ENCODE measurements at regions of chr3 and their contacts with region 1.

Region 1: DNA sequence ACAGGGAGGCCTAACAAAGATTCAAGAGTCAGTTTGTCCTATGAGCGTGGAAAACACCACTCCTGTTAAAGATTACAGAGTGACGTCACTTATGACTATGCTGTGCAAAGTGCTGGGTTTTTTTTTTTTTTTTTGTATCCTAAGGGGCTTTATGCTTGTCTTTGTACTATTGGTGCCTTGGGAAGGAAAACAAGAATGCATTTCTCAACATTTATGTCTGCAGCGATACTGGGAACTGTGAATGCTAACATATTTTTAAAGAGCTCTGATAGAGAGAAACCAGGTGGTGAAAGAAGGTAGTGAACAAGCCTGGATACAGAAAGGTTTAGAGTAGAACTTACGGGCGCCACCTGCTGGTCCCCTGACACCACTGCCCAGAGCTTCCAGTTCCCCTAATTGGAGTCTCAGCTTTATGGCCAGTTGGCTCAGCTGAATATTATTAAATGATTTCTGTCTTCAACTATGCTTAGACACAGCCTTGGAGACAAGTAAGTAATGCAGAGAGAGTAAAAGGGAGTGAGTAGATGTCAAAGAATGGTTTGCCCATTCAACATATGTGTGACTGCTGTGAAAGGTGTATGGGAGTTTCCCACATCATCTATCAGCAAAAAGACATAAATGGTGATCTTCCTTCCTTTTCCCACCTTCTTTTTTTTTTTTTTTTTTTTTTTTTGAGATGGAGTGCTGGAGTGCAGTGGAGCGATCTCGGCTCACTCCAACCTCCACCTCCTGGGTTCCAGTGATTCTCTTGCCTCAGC is 807.9 kb upstream of the CFAP20DC start:
- DNase-seq: peak; percentile 86
- H3K4me3 ChIP-seq: no peak overlapping the region
- H3K27ac ChIP-seq: no peak overlapping the region
- H3K4me1 ChIP-seq: peaks cover 0 to 4% (median 2%) of the 10 kb centered on the region in 4 donors
- H3K27me3 ChIP-seq: no peaks in the 10 kb centered on the region
- CTCF ChIP-seq: peak; percentile 84 to 96 (median 91)
- EP300 ChIP-seq: no peak
- POLR2A ChIP-seq: no peak

Region 2: DNA sequence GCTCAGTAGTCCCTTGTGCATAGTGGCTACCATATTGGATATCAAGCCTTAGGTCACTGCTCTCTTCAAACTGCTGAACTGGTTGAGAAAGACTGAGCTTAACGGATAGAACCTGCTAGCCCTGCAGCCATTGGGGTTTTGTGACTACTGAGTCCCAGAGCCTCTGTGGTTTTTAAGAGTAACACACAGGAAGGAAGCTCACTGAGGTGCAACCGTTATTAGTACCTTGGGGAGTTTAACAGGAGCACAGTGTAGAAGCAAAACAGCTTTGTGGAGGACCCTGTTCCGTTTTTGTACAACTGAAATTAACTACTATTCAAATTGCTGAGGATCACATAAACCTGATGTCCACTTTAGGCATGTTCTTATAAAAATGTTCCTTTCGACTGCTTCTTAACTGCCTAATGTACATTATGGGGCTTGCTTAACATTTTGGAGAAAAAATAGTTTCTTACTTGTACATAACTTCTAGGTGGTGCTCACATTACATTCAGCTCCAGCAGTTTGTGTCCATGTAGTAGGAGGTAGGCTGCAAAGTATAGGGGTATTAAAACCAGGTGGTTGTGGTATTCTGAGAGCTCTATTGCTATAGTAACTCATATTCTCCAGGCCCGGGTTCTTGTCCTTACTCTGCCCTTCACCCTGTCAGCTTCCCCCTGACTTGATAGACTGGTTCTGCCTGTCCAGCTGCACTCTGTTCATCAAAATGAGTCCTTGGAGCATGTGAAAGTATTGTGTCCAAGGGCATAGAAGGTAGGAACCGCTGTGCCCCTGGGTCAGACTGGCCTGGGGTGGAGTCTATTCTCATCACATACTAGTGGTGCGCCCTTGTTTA is 1507.8 kb before region 1 on chr3:
- in situ Hi-C with region 1: no loop called
- intact Hi-C with region 1: no loop called
- DNase-seq: no peak
- H3K4me3 ChIP-seq: no peak overlapping the region
- H3K27ac ChIP-seq: no peak overlapping the region
- H3K4me1 ChIP-seq: peaks cover 7 to 17% (median 8%) of the 10 kb centered on the region in 4 donors
- H3K27me3 ChIP-seq: no peaks in the 10 kb centered on the region
- CTCF ChIP-seq: no peak
- EP300 ChIP-seq: no peak
- POLR2A ChIP-seq: no peak

Region 3: GRCh38 chr3:59212128-59212779 is 645.5 kb before region 1 on chr3:
- in situ Hi-C with region 1: loop called in 3 of 4 experiments (anchors 25 kb)
- intact Hi-C with region 1: no loop called
- DNase-seq: no peak
- H3K4me3 ChIP-seq: no peak overlapping the region
- H3K27ac ChIP-seq: no peak overlapping the region
- H3K4me1 ChIP-seq: peaks cover 0 to 4% (median 0%) of the 10 kb centered on the region in 4 donors
- H3K27me3 ChIP-seq: no peaks in the 10 kb centered on the region
- CTCF ChIP-seq: peak; percentile 63 to 71 (median 68)
- EP300 ChIP-seq: no peak
- POLR2A ChIP-seq: no peak

Region 4: DNA sequence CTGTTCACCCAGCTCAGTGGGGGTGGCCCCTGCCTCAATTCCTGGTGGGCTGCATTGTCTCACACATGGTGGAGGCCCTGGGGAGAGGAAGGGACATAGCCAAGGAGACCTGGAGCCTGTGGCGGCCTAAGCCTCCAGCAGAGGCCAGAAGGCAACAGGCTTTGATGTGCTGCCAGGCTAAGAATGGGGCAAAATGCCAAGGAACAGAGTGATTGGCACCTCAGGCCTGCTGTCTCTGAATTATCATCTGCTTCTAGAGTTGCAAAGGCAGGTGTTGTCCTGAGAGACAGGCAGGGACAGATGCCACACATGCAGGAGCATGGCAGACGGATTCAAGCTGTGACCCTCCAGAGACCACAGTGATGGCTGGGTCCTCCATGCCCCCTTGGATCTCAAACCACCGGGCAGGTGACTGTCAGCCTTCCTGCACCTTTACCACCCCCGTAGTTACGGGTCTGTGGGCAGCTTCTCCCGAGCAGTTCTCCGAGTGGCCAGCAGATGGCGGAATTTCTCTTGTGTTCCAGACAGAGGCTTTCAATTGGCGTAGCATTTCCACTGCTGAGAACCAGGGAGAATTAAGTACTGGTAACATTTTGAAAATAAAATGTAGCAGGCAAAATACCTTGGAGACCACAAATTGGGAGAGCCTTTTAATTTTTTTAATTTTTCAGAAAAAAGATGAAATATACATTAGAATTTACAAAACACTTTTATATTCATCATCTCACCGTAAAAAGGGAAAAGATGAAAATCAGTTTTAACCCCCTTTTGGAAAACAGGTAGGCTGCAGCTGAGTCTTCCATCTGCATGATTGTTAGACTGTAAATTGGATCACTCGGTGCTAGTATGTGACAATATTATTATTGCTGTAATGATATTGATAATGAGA is 282.4 kb before region 1 on chr3:
- in situ Hi-C with region 1: loop called (anchors 5 to 10 kb)
- intact Hi-C with region 1: loop called (anchors 10 kb)
- DNase-seq: peak; percentile 88
- H3K4me3 ChIP-seq: no peak overlapping the region
- H3K27ac ChIP-seq: no peak overlapping the region
- H3K4me1 ChIP-seq: peaks cover 0 to 10% (median 0%) of the 10 kb centered on the region in 4 donors
- H3K27me3 ChIP-seq: no peaks in the 10 kb centered on the region
- CTCF ChIP-seq: peak; percentile 91 to 98 (median 96)
- EP300 ChIP-seq: no peak
- POLR2A ChIP-seq: no peak

Region 5: DNA sequence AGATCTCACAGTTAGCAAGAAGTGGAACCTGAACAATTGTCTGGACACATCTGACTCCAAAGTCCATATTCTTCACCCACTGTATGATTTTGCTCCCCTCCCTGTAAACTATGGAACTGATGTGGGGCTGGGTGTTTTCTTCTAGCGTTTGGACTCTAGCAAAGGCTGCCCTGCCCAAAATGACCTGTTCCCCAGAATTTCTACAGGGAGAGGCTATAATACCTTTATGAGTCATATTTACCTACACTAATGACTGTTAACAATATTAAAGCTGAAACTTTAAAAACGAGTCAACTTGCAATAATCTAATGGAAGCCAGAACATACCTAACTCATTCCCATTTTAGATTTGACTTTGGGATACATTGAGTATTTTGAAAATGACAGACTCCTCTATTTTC is 276.8 kb before region 1 on chr3:
- in situ Hi-C with region 1: loop called in 3 of 4 experiments (anchors 10 kb)
- intact Hi-C with region 1: loop called (anchors 10 kb)
- DNase-seq: no peak
- H3K4me3 ChIP-seq: no peak overlapping the region
- H3K27ac ChIP-seq: no peak overlapping the region
- H3K4me1 ChIP-seq: no peaks in the 10 kb centered on the region
- H3K27me3 ChIP-seq: no peaks in the 10 kb centered on the region
- CTCF ChIP-seq: no peak
- EP300 ChIP-seq: no peak
- POLR2A ChIP-seq: no peak

Region 6: DNA sequence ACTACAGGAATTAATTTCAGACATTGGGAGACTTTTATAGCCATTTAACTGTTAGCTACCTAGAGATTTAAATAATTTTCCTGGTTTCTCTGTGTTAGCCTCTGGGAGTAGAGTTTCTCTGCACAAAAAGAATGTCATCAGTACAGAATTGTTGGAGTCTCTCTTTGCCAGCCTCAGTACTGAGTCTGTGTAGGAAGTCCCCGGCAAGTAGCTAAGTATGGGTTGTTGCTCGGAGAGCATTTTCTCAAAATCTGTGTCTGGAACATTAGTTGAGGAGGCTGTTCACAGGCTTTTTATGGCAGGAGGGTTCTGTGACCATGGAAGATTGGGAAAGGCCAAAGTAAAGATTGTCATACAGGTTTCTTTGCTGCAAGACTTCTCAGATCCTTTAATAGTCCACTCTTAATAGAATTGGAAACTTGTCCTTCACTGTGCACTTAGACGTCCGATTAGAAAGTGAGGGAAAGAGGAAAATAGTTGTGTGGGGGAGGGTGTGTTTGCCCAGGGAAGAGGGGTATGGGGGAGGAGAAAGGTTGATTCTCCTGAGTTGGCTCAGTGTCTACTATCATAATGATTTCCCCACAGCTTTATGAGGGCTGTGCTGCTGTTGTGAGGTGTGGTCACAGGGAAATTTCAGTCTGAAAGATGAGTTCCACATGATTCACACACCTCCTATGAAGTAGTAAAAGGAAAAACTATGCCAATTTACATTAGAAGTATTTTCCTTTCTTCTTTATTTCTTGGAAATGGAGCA is 1910.7 kb after region 1 on chr3:
- in situ Hi-C with region 1: no loop called
- intact Hi-C with region 1: no loop called
- DNase-seq: peak; percentile 17
- H3K4me3 ChIP-seq: no peak overlapping the region
- H3K27ac ChIP-seq: peak overlapping the region in 3 of 4 donors; percentile 36 to 58 (median 38)
- H3K4me1 ChIP-seq: peaks cover 0 to 15% (median 8%) of the 10 kb centered on the region in 4 donors
- H3K27me3 ChIP-seq: no peaks in the 10 kb centered on the region
- CTCF ChIP-seq: no peak
- EP300 ChIP-seq: no peak
- POLR2A ChIP-seq: no peak

Measured in transverse colon (tissue), 4 donors.